ENCODE measurements at regions of chr12 and their contacts with region 1.

Region 1: DNA sequence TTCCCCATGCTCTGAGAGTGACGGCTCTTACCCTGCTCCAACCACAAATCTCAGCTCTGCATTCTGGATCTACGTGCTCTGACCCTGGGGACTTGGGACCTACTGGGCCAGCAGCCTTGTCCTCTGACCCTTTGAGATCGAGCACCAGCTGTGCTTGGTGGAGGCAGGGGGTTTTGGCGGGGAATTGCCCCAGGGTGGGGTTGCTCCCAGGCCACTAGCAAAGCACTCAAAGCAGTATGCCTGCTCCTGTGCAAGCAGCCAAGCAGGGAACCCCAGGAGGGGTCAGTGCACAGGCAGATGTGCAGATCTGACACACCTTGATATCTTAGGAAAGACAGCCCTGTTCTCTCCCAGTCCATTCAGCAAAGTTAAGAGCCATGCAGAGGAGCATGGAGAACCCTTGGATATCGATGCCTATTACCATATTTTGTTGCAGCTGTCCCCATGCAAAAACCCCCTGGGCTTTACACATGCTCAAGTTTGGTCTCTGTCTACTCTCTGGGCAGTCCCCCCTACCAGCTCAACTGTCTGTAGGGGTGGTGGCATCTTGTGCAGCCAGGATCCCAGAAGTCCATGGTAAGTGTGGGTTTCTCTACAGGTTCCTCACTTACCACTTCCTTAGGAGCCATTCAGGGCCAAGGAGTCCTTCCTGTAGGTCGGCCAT is 319.0 kb downstream of the TMTC2 start:
- DNase-seq: no peak
- ATAC-seq: no peak
- H3K4me3 ChIP-seq: no peak overlapping the region
- H3K27ac ChIP-seq: no peak overlapping the region
- H3K4me1 ChIP-seq: no peaks in the 10 kb centered on the region
- H3K27me3 ChIP-seq: no peaks in the 10 kb centered on the region
- CTCF ChIP-seq: no peak
- POLR2A ChIP-seq: no peak
- RAD21 ChIP-seq: no peak

Region 2: DNA sequence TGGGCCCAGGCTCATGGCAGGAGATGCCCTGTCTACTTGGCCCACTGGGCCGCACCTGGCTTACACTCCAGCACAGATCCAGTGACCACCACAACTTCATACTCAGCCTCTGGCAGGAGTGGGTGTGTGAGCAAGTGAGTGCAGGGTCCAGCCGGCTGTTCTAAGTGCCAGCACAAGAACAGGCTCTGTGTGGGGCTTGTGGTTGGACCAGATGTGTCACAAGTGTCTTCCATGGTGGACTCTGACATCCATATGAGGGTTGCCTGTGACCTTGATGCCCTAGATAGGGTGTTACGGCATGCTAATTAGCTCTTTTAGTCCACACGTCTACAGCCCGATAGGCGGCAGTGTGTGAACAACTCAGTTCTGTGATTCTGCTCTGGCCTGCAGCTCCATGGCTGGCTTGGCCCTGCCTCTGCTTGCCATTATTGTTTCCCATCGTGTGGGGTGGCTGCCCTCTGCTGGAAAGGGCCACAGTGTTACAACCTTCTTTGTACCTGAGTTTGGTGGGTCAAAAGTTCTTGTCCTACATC is 817.8 kb after region 1 on chr12:
- CTCF ChIA-PET with region 1: no interaction called
- POLR2A ChIA-PET with region 1: no interaction called
- dilution Hi-C with region 1: no loop called
- in situ Hi-C with region 1: no loop called
- intact Hi-C with region 1: loop called (anchors 1 kb)
- DNase-seq: no peak
- ATAC-seq: no peak
- H3K4me3 ChIP-seq: no peak overlapping the region
- H3K27ac ChIP-seq: no peak overlapping the region
- H3K4me1 ChIP-seq: no peaks in the 10 kb centered on the region
- H3K27me3 ChIP-seq: no peaks in the 10 kb centered on the region
- CTCF ChIP-seq: no peak
- POLR2A ChIP-seq: no peak
- RAD21 ChIP-seq: no peak

Region 3: GRCh38 chr12:84397263-84397662 is 1391.6 kb after region 1 on chr12:
- CTCF ChIA-PET with region 1: no interaction called
- POLR2A ChIA-PET with region 1: no interaction called
- dilution Hi-C with region 1: no loop called
- in situ Hi-C with region 1: no loop called
- intact Hi-C with region 1: loop called (anchors 2 kb)
- DNase-seq: no peak
- ATAC-seq: no peak
- H3K4me3 ChIP-seq: no peak overlapping the region
- H3K27ac ChIP-seq: no peak overlapping the region
- H3K4me1 ChIP-seq: no peaks in the 10 kb centered on the region
- H3K27me3 ChIP-seq: no peaks in the 10 kb centered on the region
- CTCF ChIP-seq: peak; percentile 38; the same call in 1 of the 2 replicates
- POLR2A ChIP-seq: no peak
- RAD21 ChIP-seq: no peak